Ascending aorta (tissue), 2 donors: ENCODE measurements at regions of chr14 and their contacts with region 1.

Region 1: DNA sequence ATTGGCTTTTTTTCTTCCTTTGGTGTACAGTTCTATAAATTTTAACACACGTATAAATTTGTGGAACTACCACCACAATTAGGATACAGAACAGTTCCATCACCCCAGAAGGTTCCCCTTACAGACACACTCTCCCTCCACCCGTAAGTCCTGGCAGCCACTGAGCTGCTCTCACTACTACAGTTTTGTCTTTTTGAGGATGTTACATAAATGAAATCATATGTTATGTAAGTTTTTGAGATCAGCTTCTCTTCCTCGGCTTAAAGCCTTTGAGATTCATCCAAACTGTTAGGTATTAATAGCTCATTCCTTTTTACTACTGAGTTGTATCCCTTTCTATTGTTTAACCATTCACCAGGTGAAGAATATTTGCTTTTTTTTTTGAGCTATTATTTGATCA is 74.3 kb upstream of the SLC24A4 start:
- DNase-seq: no peak
- H3K4me3 ChIP-seq: no peak overlapping the region
- H3K27ac ChIP-seq: no peak overlapping the region
- H3K4me1 ChIP-seq: no peaks in the 10 kb centered on the region
- H3K27me3 ChIP-seq: no peaks in the 10 kb centered on the region
- CTCF ChIP-seq: no peak

Region 2: GRCh38 chr14:92160619-92161018 is 88.1 kb before region 1 on chr14:
- intact Hi-C with region 1: loop called (anchors 10 kb)
- DNase-seq: no peak
- H3K4me3 ChIP-seq: no peak overlapping the region
- H3K27ac ChIP-seq: no peak overlapping the region
- H3K4me1 ChIP-seq: no peaks in the 10 kb centered on the region
- H3K27me3 ChIP-seq: no peaks in the 10 kb centered on the region
- CTCF ChIP-seq: no peak